ENCODE measurements at regions of chr9 and their contacts with region 1.

Region 1: GRCh38 chr9:71604197-71605063 is 163.9 kb downstream of the CEMIP2 start:
- DNase-seq: peak; percentile 90
- ATAC-seq: peak; percentile 78
- H3K4me3 Mint-ChIP-seq: no peak overlapping the region
- H3K27ac Mint-ChIP-seq: no peak overlapping the region
- H3K4me1 Mint-ChIP-seq: no peaks in the 10 kb centered on the region
- H3K27me3 Mint-ChIP-seq: no peaks in the 10 kb centered on the region

Region 2: DNA sequence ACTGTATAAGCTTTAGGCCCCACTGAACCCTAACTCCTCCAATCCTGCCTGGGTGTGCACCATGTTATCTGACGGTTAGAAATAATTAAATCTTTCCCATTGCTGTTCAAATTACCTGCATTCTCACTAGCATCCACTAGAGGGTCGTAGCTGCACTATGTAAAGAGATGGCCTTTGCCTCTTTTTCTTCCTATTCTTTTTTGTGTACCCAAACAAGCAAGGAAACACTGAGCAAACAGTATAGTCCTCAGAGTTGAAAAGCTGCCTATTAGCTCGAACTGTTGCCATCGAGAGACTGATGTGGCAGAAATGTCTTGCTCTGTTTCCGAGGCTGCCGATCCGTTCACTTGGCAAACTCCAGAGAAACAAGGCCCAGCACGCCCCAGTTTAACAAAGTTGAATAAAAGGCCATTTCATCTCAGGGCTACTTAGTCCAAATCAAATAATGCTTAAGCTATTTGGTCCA is 319.2 kb before region 1 on chr9:
- CTCF ChIA-PET with region 1: no interaction called
- POLR2A ChIA-PET with region 1: no interaction called
- intact Hi-C with region 1: loop called in 1 of 2 experiments (anchors 10 kb)
- DNase-seq: peak; percentile 25
- ATAC-seq: peak; percentile 60
- H3K4me3 Mint-ChIP-seq: no peak overlapping the region
- H3K27ac Mint-ChIP-seq: no peak overlapping the region
- H3K4me1 Mint-ChIP-seq: no peaks in the 10 kb centered on the region
- H3K27me3 Mint-ChIP-seq: peaks cover 5% of the 10 kb centered on the region

Region 3: GRCh38 chr9:71614409-71615010 is 10.1 kb after region 1 on chr9:
- CTCF ChIA-PET with region 1: interaction called, 15 read pairs
- POLR2A ChIA-PET with region 1: no interaction called
- intact Hi-C with region 1: no loop called
- DNase-seq: no peak
- ATAC-seq: no peak
- H3K4me3 Mint-ChIP-seq: no peak overlapping the region
- H3K27ac Mint-ChIP-seq: no peak overlapping the region
- H3K4me1 Mint-ChIP-seq: no peaks in the 10 kb centered on the region
- H3K27me3 Mint-ChIP-seq: no peaks in the 10 kb centered on the region

Region 4: GRCh38 chr9:71637926-71638325 is 33.5 kb after region 1 on chr9:
- CTCF ChIA-PET with region 1: interaction called, 4 read pairs
- POLR2A ChIA-PET with region 1: no interaction called
- intact Hi-C with region 1: loop called in 1 of 2 experiments (anchors 2 kb)
- DNase-seq: no peak
- ATAC-seq: no peak
- H3K4me3 Mint-ChIP-seq: no peak overlapping the region
- H3K27ac Mint-ChIP-seq: peak overlapping the region; percentile 2
- H3K4me1 Mint-ChIP-seq: peaks cover 14% of the 10 kb centered on the region
- H3K27me3 Mint-ChIP-seq: no peaks in the 10 kb centered on the region

Region 5: DNA sequence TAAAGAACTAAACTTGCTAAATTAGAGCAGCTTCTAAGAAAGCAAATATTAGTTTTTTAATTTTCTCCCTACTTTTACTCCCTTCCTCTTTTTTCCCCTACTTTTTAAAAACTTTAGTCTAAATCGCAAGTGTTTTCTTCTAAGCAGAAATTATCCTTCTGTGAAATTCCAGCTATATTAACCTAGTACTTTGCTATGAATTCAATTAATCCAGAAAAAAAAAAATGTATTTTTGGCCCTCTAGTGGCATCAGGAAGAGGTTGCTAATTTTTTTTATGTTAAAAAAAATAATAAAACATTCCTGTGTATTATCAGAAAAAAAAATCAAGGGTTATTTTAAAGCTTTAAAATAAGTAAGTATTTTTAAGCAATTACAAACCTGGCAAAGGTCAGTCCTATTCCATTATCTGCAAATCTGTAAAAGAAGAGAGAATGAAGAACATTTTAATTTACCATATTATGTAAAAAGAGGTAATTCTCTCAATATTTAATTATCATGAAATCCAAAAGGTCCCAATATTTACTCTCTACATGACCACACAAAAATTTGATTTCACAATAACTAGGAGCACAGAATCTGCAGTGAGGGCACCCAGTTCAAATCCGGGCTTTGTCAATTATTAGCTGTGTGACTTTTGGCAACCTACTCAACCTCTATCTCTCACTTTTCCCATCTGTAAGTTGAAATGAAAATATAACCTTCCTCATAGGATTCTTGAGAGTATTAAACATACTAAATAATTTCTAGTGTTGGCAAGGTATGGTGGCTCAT is 111.9 kb after region 1 on chr9:
- CTCF ChIA-PET with region 1: interaction called, 8 read pairs
- POLR2A ChIA-PET with region 1: no interaction called
- intact Hi-C with region 1: loop called in 1 of 2 experiments (anchors 5 kb)
- DNase-seq: no peak
- ATAC-seq: no peak
- H3K4me3 Mint-ChIP-seq: no peak overlapping the region
- H3K27ac Mint-ChIP-seq: no peak overlapping the region
- H3K4me1 Mint-ChIP-seq: peaks cover 3% of the 10 kb centered on the region
- H3K27me3 Mint-ChIP-seq: no peaks in the 10 kb centered on the region

Region 6: GRCh38 chr9:72022841-72023240 is 418.4 kb after region 1 on chr9:
- CTCF ChIA-PET with region 1: interaction called, 12 read pairs
- POLR2A ChIA-PET with region 1: no interaction called
- intact Hi-C with region 1: loop called (anchors 1 to 10 kb)
- DNase-seq: no peak
- ATAC-seq: no peak
- H3K4me3 Mint-ChIP-seq: no peak overlapping the region
- H3K27ac Mint-ChIP-seq: no peak overlapping the region
- H3K4me1 Mint-ChIP-seq: no peaks in the 10 kb centered on the region
- H3K27me3 Mint-ChIP-seq: no peaks in the 10 kb centered on the region

Region 7: GRCh38 chr9:72065076-72065475 is 460.6 kb after region 1 on chr9:
- CTCF ChIA-PET with region 1: no interaction called
- POLR2A ChIA-PET with region 1: no interaction called
- intact Hi-C with region 1: no loop called
- DNase-seq: no peak
- ATAC-seq: no peak
- H3K4me3 Mint-ChIP-seq: no peak overlapping the region
- H3K27ac Mint-ChIP-seq: no peak overlapping the region
- H3K4me1 Mint-ChIP-seq: no peaks in the 10 kb centered on the region
- H3K27me3 Mint-ChIP-seq: peaks cover 11% of the 10 kb centered on the region

Region 8: GRCh38 chr9:72102520-72102919 is 498.1 kb after region 1 on chr9:
- CTCF ChIA-PET with region 1: no interaction called
- POLR2A ChIA-PET with region 1: no interaction called
- intact Hi-C with region 1: no loop called
- DNase-seq: no peak
- ATAC-seq: no peak
- H3K4me3 Mint-ChIP-seq: no peak overlapping the region
- H3K27ac Mint-ChIP-seq: no peak overlapping the region
- H3K4me1 Mint-ChIP-seq: no peaks in the 10 kb centered on the region
- H3K27me3 Mint-ChIP-seq: no peaks in the 10 kb centered on the region

Measured in activated CD4-positive, alpha-beta T cell treated with anti-CD3 and anti-CD28 coated beads for 36 hours (primary cell).